ENCODE measurements at regions of chr20 and their contacts with region 1.

Region 1: DNA sequence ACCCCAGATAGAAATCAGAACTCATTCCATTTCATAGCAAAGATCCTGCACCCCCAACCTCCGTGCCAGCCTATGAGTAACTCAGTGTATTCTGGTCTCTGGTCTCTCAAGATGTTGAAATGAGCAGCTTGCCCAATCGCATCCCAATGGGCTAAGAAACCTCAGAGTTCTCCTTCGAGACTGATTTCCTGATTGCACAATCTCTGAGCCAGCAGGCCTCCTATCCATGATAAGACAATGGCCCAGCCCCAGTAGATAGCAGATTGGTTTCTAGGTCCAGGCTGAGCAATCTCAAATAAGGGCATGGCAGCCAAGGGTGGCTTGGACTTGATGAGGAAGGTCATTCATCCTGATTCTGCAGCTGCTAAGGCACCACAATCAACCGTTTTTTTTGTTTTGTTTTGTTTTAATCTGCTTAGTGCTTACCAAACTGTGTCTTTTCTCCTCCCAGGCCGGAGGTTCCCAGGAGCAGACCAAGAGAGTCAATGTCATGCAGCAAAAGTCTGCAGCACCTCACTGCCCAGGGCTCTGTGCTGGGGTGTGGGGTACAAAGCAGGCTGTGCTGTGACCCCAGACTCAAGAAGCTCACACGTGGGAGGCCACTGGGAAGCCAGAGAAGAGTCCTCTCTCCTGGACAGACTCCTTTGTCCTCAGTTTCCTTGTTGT is 125.1 kb upstream of the NXT1 start:
- DNase-seq: peak; percentile 97 to 100 (median 99)
- H3K4me3 ChIP-seq: peak overlapping the region in 1 of 3 experiments; percentile 35
- H3K4me3 Mint-ChIP-seq: peak overlapping the region in 1 of 2 donors; percentile 56
- H3K27ac ChIP-seq: peak overlapping the region; percentile 64 to 93
- H3K27ac Mint-ChIP-seq: peak overlapping the region; percentile 88 to 94 (median 93)
- H3K4me1 ChIP-seq: peaks cover 35 to 42% of the 10 kb centered on the region in 2 donors
- H3K4me1 Mint-ChIP-seq: peaks cover 39% of the 10 kb centered on the region
- H3K27me3 ChIP-seq: no peaks in the 10 kb centered on the region
- H3K27me3 Mint-ChIP-seq: peaks cover 0 to 2% (median 1%) of the 10 kb centered on the region in 3 donors
- CTCF ChIP-seq: peak; percentile 1

Region 2: DNA sequence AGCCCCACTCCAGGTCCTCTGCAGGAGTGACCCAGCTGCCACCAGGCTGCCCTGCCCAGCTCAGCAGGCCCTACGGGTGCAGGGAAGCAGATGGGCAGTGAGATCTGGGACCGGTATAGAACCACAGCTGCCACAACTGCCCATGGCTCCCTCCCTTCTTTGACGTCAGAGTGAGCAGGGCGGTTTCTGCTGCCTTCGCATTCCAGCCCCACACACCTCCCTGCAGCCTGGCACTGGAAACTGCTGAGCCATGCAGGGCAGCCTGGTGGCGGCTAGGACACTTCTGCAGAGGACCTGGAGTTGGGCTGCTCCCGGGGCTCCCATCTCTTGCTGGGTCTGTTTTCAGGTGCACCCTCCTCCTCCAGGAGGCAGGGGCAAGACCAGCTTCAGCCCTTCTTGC is 37.8 kb before region 1 on chr20:
- intact Hi-C with region 1: loop called (anchors 5 kb)
- DNase-seq: peak in 1 of 3 donors; percentile 66
- H3K4me3 ChIP-seq: no peak overlapping the region
- H3K4me3 Mint-ChIP-seq: no peak overlapping the region
- H3K27ac ChIP-seq: no peak overlapping the region
- H3K27ac Mint-ChIP-seq: peak overlapping the region in 1 of 7 donors; percentile 82
- H3K4me1 ChIP-seq: peaks cover 6 to 15% of the 10 kb centered on the region in 2 donors
- H3K4me1 Mint-ChIP-seq: peaks cover 17% of the 10 kb centered on the region
- H3K27me3 ChIP-seq: no peaks in the 10 kb centered on the region
- H3K27me3 Mint-ChIP-seq: no peaks in the 10 kb centered on the region
- CTCF ChIP-seq: no peak

Region 3: GRCh38 chr20:23193801-23194382 is 31.6 kb before region 1 on chr20:
- intact Hi-C with region 1: loop called (anchors 5 kb)
- DNase-seq: peak; percentile 78 to 84 (median 82)
- H3K4me3 ChIP-seq: no peak overlapping the region
- H3K4me3 Mint-ChIP-seq: no peak overlapping the region
- H3K27ac ChIP-seq: peak overlapping the region in 1 of 2 donors; percentile 60
- H3K27ac Mint-ChIP-seq: peak overlapping the region; percentile 72 to 88 (median 86)
- H3K4me1 ChIP-seq: peaks cover 40 to 52% of the 10 kb centered on the region in 2 donors
- H3K4me1 Mint-ChIP-seq: peaks cover 46% of the 10 kb centered on the region
- H3K27me3 ChIP-seq: no peaks in the 10 kb centered on the region
- H3K27me3 Mint-ChIP-seq: peaks cover 0 to 3% (median 0%) of the 10 kb centered on the region in 3 donors
- CTCF ChIP-seq: no peak

Measured in CD14-positive monocyte (primary cell).